WTC11 (cell line): ENCODE measurements at regions of chr22 and their contacts with region 1.

Region 1: DNA sequence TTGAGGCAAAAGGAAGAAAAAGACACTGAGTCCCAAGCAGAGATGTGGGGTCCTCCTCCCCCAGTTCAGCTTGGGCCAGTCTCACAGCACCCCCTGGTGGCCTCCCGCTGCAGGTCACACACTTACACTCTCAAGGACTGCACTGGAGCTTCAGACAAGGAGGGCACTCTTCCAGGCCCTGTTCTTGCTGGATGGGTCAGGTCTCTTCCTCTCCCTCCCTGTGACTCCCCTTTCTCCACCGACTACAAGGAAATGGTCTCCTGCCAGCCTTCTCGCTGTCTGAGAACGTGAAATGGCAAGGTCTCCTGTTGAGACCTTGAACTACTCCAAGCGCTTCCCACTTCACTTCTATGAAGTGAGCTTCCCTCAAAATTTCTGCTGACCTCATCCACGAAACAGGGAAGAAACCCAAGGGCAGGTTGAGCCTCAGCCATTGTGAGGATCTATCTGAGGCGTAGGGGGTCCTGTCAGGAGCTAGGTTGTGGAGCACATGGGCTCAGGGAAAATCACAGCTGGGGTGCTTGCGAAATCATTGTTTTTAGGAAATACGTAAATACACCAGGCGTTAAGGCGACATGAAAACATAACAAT is 11.2 kb upstream of the IGLL1 start:
- DNase-seq: peak; percentile 86
- ATAC-seq: peak; percentile 98
- H3K4me3 Mint-ChIP-seq: no peak overlapping the region
- H3K27ac Mint-ChIP-seq: no peak overlapping the region
- H3K4me1 Mint-ChIP-seq: peaks cover 16% of the 10 kb centered on the region
- H3K27me3 Mint-ChIP-seq: peaks cover 2% of the 10 kb centered on the region; the same call in 1 of the 2 replicates
- CTCF ChIP-seq: peak; percentile 94

Region 2: GRCh38 chr22:23539135-23539838 is 52.0 kb before region 1 on chr22:
- CTCF ChIA-PET with region 1: interaction called, 50 read pairs
- POLR2A ChIA-PET with region 1: no interaction called
- DNase-seq: peak; percentile 82
- ATAC-seq: peak; percentile 90
- H3K4me3 Mint-ChIP-seq: peak overlapping the region; percentile 15; the same call in 1 of the 2 replicates
- H3K27ac Mint-ChIP-seq: no peak overlapping the region
- H3K4me1 Mint-ChIP-seq: peaks cover 54% of the 10 kb centered on the region
- H3K27me3 Mint-ChIP-seq: peaks cover 24% of the 10 kb centered on the region
- CTCF ChIP-seq: peak; percentile 72

Region 3: DNA sequence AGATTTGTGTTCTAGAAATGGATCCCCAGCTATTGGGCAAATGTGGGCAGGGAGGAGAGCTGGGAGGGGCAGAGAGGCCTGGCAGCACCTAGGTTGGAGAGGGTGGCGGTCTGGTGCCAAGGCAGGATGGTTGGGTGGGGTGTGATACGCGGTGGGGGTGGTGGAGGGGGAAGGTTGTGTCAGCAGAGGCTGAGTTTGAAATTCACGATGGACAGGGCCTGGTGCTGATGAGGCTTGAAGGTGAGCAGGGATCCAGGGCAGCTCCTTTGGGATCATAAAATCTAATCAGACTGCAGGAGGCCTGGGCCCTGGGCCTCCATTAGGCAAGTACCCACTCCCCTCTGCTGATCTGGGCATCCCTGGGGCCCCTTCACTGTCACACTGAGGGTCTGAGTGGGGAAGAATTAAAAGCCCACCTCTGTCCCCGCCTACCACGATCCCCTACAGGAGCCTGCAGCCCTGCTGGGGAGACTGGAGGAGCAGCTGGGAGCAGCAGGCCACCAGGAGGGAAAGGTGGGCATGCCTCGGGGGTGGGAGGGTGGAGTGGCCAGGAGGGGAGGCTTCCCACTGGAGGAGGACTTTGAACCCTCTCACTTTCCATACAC is 35.2 kb before region 1 on chr22:
- CTCF ChIA-PET with region 1: interaction called, 11 read pairs
- POLR2A ChIA-PET with region 1: no interaction called
- DNase-seq: no peak
- ATAC-seq: no peak
- H3K4me3 Mint-ChIP-seq: no peak overlapping the region
- H3K27ac Mint-ChIP-seq: no peak overlapping the region
- H3K4me1 Mint-ChIP-seq: 0 out of 2 replicates have a peak, but pooled peaks cover 5% of the 10 kb centered on the region
- H3K27me3 Mint-ChIP-seq: peaks cover 11% of the 10 kb centered on the region
- CTCF ChIP-seq: no peak

Region 4: DNA sequence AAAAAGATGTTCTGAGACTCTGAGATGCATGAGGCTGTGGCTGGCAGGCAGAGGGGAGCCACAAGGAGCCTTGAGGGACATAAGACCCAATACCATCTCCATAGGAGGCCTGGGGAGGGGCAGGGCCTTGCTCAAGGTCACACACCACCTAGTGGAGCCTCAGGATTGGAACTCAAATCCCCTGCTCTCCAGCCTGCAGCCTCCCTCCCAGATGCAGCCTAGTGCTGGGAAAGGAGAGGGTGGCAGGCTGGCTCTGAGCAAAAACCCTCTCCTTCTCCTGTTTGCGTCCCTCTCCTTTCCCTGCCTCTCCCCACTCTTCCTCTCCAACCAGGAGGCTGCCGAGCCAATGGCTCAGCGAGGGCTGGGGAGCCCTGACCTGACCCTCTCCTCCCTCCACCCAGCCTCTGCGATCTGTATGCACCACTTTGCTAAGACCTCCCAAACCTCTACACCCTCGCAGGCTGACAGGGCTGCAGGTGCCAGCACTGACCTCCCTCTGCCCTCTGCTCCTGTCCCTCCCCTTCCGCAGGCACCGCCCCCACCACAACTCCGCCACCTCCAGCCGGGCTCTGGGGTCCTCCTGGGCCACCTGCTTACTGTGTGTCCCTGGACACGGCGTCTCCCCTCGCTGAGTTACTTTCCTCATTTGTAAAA is 25.9 kb before region 1 on chr22:
- CTCF ChIA-PET with region 1: interaction called, 14 read pairs
- POLR2A ChIA-PET with region 1: no interaction called
- DNase-seq: peak; percentile 54
- ATAC-seq: peak; percentile 88
- H3K4me3 Mint-ChIP-seq: peak overlapping the region; percentile 83
- H3K27ac Mint-ChIP-seq: no peak overlapping the region
- H3K4me1 Mint-ChIP-seq: peaks cover 12% of the 10 kb centered on the region
- H3K27me3 Mint-ChIP-seq: peaks cover 61% of the 10 kb centered on the region
- CTCF ChIP-seq: no peak

Region 5: DNA sequence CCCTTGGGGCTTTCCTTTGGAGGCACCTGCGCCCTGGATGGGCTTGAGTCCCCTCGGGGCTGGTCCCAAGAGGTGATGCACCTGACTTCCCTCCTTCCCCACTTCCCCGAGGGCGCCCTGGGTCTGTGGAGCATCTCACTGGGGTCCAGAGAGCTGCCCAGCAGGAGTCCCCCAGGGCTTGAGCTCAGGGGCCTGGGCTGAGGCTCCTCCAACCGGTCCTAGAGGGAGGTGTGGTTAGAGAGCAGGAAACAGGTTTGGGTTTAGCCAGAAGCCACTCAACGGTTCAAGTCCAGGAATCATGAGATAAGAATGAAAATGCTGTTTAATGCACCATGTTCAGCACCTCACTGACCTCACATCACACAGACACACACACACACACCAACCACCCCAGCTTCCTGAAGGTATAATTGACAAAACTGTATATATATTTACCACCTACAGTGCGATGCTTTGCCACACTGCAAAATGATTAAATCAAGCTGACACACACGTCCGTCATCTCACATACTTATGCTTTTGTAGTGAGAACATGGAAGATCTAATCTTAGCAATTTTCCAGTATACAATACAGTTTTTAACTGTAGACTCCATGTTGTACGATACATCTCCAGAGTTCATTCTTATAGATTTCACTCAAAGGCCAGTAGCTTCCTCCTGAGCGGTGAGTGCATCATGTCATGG is 10.6 kb before region 1 on chr22:
- CTCF ChIA-PET with region 1: interaction called, 24 read pairs
- POLR2A ChIA-PET with region 1: no interaction called
- DNase-seq: no peak
- ATAC-seq: no peak
- H3K4me3 Mint-ChIP-seq: no peak overlapping the region
- H3K27ac Mint-ChIP-seq: no peak overlapping the region
- H3K4me1 Mint-ChIP-seq: no peaks in the 10 kb centered on the region
- H3K27me3 Mint-ChIP-seq: peaks cover 3% of the 10 kb centered on the region; the same call in 1 of the 2 replicates
- CTCF ChIP-seq: no peak

Region 6: DNA sequence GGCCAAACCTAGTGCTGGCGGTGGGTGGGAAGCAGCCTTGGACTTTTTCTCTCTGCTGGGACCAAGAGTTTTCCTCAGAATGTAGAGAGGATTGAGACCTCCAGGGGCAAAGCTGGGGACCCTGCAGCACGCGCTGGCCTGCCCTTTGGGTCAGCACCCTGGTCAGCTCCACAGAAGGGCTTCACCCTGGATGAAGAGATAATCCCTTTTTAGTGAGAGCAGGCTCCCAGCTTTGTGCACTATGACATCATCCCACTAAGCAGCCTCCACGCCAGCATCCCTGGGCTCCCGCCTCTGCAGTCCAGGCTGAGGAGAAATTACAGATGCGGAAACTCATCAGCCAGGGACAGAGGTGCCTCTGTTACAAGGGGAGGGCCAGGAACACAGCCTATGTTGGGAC is 17.3 kb after region 1 on chr22:
- CTCF ChIA-PET with region 1: interaction called, 22 read pairs
- POLR2A ChIA-PET with region 1: no interaction called
- DNase-seq: peak; percentile 69
- ATAC-seq: peak; percentile 79
- H3K4me3 Mint-ChIP-seq: no peak overlapping the region
- H3K27ac Mint-ChIP-seq: no peak overlapping the region
- H3K4me1 Mint-ChIP-seq: no peaks in the 10 kb centered on the region
- H3K27me3 Mint-ChIP-seq: peaks cover 12% of the 10 kb centered on the region; the same call in 1 of the 2 replicates
- CTCF ChIP-seq: no peak

Region 7: DNA sequence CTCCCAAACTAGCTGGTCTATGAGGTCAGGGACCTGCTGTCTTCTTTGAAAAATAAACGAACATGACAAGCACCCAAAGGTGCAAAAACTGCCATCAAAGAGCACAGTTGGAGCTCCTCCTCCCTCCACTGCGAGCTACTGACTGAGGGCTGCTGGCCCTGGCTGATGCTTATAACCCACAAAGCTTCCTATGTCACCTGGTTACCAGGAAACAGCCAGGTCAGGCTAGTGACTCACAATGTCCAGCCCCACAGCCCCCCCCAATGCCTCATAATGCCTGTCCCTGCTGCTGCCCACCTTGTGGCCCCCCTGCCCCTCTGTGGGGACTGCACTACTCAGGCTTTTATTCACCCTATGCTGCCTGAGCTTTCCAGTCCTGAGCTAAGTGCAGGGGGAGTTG is 40.9 kb after region 1 on chr22 and contains the start of gene DRICH1:
- CTCF ChIA-PET with region 1: no interaction called
- POLR2A ChIA-PET with region 1: no interaction called
- DNase-seq: no peak
- ATAC-seq: no peak
- H3K4me3 Mint-ChIP-seq: no peak within 1 kb of the TSS
- H3K27ac Mint-ChIP-seq: no peak within 1 kb of the TSS
- H3K4me1 Mint-ChIP-seq: no peaks in the 10 kb centered on the region
- H3K27me3 Mint-ChIP-seq: peaks cover 3% of the 10 kb centered on the region; the same call in 1 of the 2 replicates
- CTCF ChIP-seq: no peak
- total RNA-seq, gene DRICH1: 0.21 to 0.32 TPM (median 0.26 TPM) in 3 replicates